ENCODE measurements at regions of chr3 and their contacts with region 1.

Region 1: GRCh38 chr3:189961525-189962161 is 159.1 kb downstream of the P3H2 start:
- DNase-seq: peak; percentile 74 to 90

Region 2: GRCh38 chr3:189229196-189229828 is 732.3 kb before region 1 on chr3:
- in situ Hi-C with region 1: no loop called
- DNase-seq: no peak

Region 3: DNA sequence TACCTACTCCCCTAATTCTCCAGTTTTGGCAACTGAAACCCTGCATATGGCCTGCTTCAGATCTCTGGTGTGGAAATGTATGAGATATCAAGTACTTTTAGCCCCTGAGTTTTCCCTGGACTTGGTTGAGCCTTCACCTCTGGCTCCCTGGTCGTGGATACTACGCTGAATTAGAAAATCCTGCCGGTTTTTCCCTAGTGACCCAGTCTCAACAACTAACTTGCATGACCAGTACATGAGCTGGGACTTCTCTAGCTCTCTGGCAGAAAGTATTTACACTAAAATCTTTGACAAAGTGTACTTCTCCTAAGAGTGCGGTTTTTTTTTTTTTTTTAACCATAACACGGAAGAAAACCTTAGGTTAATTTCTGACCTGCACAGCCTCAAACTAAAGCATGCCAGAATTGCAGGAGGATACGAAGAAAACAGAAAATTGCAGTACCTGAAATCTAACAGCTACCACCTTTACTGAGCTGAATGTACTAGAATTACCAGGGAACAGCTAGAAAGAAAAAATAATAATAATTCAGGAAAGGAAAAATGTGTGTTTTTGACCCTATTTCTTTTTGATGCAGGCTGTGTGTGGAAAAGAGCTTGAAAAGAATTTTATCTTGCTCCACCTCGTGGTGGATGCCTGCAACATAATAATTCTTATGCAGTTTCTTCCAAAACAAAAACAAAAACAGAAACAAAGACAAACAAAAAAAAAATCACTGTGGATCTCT is 735.3 kb after region 1 on chr3:
- in situ Hi-C with region 1: loop called (anchors 25 kb)
- DNase-seq: peak; percentile 29 to 76